GM12878 (cell line): ENCODE measurements at regions of chr16 and their contacts with region 1.

Region 1: GRCh38 chr16:20704281-20704680 is 6.8 kb upstream of the ACSM1 start:
- DNase-seq: no peak
- ATAC-seq: no peak
- H3K4me3 ChIP-seq: no peak overlapping the region
- H3K27ac ChIP-seq: no peak overlapping the region
- H3K4me1 ChIP-seq: no peaks in the 10 kb centered on the region
- H3K27me3 ChIP-seq: no peaks in the 10 kb centered on the region
- CTCF ChIP-seq: no peak
- EP300 ChIP-seq: no peak
- POLR2A ChIP-seq: no peak
- RAD21 ChIP-seq: no peak

Region 2: DNA sequence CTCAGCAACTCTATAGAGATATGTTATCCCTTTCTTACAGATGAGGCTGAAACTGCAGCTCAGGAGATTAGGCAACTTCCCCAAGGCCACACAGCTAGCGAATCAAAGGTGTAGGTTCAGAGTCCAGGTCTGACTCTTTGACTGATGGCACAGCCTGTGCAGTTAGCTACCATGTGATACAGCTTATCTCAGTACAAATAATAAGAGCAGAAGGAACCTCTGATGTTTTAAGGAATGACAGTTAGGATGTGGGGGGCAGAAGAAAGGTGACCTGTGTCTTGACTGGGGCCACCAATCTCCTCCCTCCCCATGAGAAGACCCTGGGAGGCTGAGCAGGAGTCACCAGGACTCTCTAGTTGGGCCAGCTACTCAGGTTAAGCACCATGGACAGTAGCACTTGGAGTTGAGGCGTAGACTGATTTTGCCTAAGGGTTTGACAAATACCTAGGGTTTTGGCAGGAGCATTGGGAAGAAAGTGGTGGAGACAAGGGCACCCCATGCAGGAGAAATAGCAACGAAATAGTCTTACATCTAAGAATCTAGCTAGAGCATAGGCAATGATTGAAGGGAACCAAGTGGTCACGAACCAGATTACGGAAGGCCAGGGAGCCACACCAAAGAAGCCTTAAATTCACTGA is 105.3 kb before region 1 on chr16:
- CTCF ChIA-PET with region 1: interaction called, 6 read pairs
- POLR2A ChIA-PET with region 1: no interaction called
- RAD21 ChIA-PET with region 1: interaction called, 6 read pairs
- SMC1A ChIA-PET with region 1: interaction called, 3 read pairs
- in situ Hi-C with region 1: loop called (anchors 10 kb)
- intact Hi-C with region 1: loop called (anchors 5 kb)
- DNase-seq: no peak
- ATAC-seq: no peak
- H3K4me3 ChIP-seq: no peak overlapping the region
- H3K27ac ChIP-seq: no peak overlapping the region
- H3K4me1 ChIP-seq: no peaks in the 10 kb centered on the region
- H3K27me3 ChIP-seq: no peaks in the 10 kb centered on the region
- CTCF ChIP-seq: no peak
- EP300 ChIP-seq: no peak
- POLR2A ChIP-seq: no peak
- RAD21 ChIP-seq: no peak

Region 3: GRCh38 chr16:20611975-20612481 is 92.3 kb before region 1 on chr16:
- CTCF ChIA-PET with region 1: interaction called, 5 read pairs
- POLR2A ChIA-PET with region 1: no interaction called
- RAD21 ChIA-PET with region 1: no interaction called
- SMC1A ChIA-PET with region 1: no interaction called
- in situ Hi-C with region 1: loop called (anchors 10 kb)
- intact Hi-C with region 1: no loop called
- DNase-seq: no peak
- ATAC-seq: no peak
- H3K4me3 ChIP-seq: no peak overlapping the region
- H3K27ac ChIP-seq: no peak overlapping the region
- H3K4me1 ChIP-seq: no peaks in the 10 kb centered on the region
- H3K27me3 ChIP-seq: no peaks in the 10 kb centered on the region; a peak in 1 of 4 replicates
- CTCF ChIP-seq: no peak
- EP300 ChIP-seq: no peak
- POLR2A ChIP-seq: no peak
- RAD21 ChIP-seq: no peak

Region 4: DNA sequence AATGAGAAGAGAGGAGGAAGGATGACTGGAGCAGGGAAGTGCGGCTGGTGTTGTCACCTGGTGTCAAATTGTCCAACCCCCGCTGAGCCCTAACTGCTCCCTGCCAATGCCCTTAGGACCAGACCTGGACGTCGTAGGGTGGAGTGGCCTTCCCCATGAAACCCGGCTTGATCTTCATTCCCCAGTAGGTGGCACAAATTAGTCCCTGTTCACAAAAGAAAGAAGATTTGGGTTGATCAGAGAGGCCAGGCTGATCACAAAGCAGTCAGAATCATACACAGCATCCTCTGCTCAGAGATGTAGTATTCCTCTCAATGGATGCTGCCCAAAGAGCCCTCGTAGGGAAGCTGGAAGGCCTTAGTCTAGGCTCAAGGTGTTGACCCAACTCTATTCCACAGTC is 67.0 kb before region 1 on chr16:
- CTCF ChIA-PET with region 1: no interaction called
- POLR2A ChIA-PET with region 1: no interaction called
- RAD21 ChIA-PET with region 1: no interaction called
- SMC1A ChIA-PET with region 1: no interaction called
- in situ Hi-C with region 1: no loop called
- intact Hi-C with region 1: no loop called
- DNase-seq: no peak
- ATAC-seq: no peak
- H3K4me3 ChIP-seq: no peak overlapping the region
- H3K27ac ChIP-seq: no peak overlapping the region
- H3K4me1 ChIP-seq: no peaks in the 10 kb centered on the region
- H3K27me3 ChIP-seq: no peaks in the 10 kb centered on the region
- CTCF ChIP-seq: no peak
- EP300 ChIP-seq: no peak
- POLR2A ChIP-seq: no peak
- RAD21 ChIP-seq: no peak

Region 5: GRCh38 chr16:20647736-20648135 is 56.5 kb before region 1 on chr16:
- CTCF ChIA-PET with region 1: no interaction called
- POLR2A ChIA-PET with region 1: no interaction called
- RAD21 ChIA-PET with region 1: no interaction called
- SMC1A ChIA-PET with region 1: no interaction called
- in situ Hi-C with region 1: no loop called
- intact Hi-C with region 1: no loop called
- DNase-seq: no peak
- ATAC-seq: no peak
- H3K4me3 ChIP-seq: no peak overlapping the region
- H3K27ac ChIP-seq: no peak overlapping the region
- H3K4me1 ChIP-seq: no peaks in the 10 kb centered on the region
- H3K27me3 ChIP-seq: no peaks in the 10 kb centered on the region
- CTCF ChIP-seq: no peak
- EP300 ChIP-seq: no peak
- POLR2A ChIP-seq: no peak
- RAD21 ChIP-seq: no peak

Region 6: DNA sequence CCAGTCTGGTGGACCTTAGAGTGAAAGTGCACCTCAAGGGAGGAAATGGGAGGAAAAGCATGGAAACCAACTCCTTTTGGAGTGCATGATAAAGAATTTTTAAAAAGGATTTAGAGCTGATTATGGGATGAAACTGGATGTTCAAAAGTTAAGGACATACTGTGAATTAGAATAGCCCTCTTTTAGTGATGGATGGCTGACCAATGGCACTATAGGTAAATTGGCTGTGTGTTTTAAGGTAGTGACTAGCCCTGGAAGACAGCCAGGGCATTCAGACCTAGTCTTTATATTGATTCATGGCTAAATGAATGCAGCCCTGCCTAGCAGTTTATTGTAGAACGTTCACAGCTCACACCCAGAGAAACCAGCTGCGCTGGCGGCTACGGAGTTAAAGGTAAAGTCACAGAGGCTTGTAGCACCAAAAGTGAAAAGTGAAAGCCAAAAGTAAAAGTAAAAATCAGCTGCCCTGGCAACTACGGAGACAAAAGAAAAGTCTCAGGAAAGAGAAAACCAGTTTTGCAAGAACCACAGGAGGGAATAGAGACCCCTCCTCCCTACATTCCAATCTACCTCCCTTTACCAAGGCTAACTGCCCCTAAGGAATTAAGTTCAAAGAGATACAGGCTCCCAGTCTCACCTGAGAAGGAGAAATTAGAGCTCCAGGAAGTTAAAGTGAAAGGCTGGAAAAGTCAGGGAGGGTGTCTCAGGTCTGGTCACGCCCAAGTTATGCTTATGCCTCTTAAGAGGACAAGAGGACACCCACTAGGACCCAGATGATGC is 28.6 kb before region 1 on chr16:
- CTCF ChIA-PET with region 1: interaction called, 11 read pairs
- POLR2A ChIA-PET with region 1: no interaction called
- RAD21 ChIA-PET with region 1: no interaction called
- SMC1A ChIA-PET with region 1: interaction called, 6 read pairs
- in situ Hi-C with region 1: no loop called
- intact Hi-C with region 1: no loop called
- DNase-seq: peak; percentile 38
- ATAC-seq: peak; percentile 86
- H3K4me3 ChIP-seq: peak overlapping the region; percentile 75; the same call in 1 of the 2 replicates
- H3K27ac ChIP-seq: peak overlapping the region; percentile 64; the same call in 1 of the 2 replicates
- H3K4me1 ChIP-seq: peaks cover 22% of the 10 kb centered on the region
- H3K27me3 ChIP-seq: no peaks in the 10 kb centered on the region
- CTCF ChIP-seq: no peak
- EP300 ChIP-seq: no peak
- POLR2A ChIP-seq: no peak
- RAD21 ChIP-seq: no peak

Region 7: GRCh38 chr16:20806168-20807050 is 102.1 kb after region 1 on chr16 and contains the starts of genes ERI2 and REXO5:
- CTCF ChIA-PET with region 1: no interaction called
- POLR2A ChIA-PET with region 1: no interaction called
- RAD21 ChIA-PET with region 1: no interaction called
- SMC1A ChIA-PET with region 1: no interaction called
- in situ Hi-C with region 1: no loop called
- intact Hi-C with region 1: no loop called
- DNase-seq: peak; percentile 59
- ATAC-seq: peak; percentile 92
- H3K4me3 ChIP-seq: peak within 1 kb of the TSS; percentile 88
- H3K27ac ChIP-seq: peak within 1 kb of the TSS; percentile 94
- H3K4me1 ChIP-seq: peaks cover 7% of the 10 kb centered on the region
- H3K27me3 ChIP-seq: no peaks in the 10 kb centered on the region
- CTCF ChIP-seq: peak; percentile 41 to 57 (median 56); a peak in 5 of 6 replicates
- EP300 ChIP-seq: no peak
- POLR2A ChIP-seq: peak; percentile 76
- RAD21 ChIP-seq: no peak
- polyA plus RNA-seq, gene ERI2: 7.7 to 7.8 TPM
- polyA plus RNA-seq, gene REXO5: 3.8 to 4.1 TPM

Region 8: GRCh38 chr16:21126518-21126917 is 422.2 kb after region 1 on chr16:
- CTCF ChIA-PET with region 1: no interaction called
- POLR2A ChIA-PET with region 1: no interaction called
- RAD21 ChIA-PET with region 1: no interaction called
- SMC1A ChIA-PET with region 1: no interaction called
- in situ Hi-C with region 1: no loop called
- intact Hi-C with region 1: no loop called
- DNase-seq: no peak
- ATAC-seq: no peak
- H3K4me3 ChIP-seq: no peak overlapping the region
- H3K27ac ChIP-seq: no peak overlapping the region
- H3K4me1 ChIP-seq: no peaks in the 10 kb centered on the region
- H3K27me3 ChIP-seq: no peaks in the 10 kb centered on the region; a peak in 1 of 4 replicates
- CTCF ChIP-seq: no peak
- EP300 ChIP-seq: no peak
- POLR2A ChIP-seq: no peak
- RAD21 ChIP-seq: no peak